H1 (cell line): ENCODE measurements at regions of chr11 and their contacts with region 1.

Region 1: DNA sequence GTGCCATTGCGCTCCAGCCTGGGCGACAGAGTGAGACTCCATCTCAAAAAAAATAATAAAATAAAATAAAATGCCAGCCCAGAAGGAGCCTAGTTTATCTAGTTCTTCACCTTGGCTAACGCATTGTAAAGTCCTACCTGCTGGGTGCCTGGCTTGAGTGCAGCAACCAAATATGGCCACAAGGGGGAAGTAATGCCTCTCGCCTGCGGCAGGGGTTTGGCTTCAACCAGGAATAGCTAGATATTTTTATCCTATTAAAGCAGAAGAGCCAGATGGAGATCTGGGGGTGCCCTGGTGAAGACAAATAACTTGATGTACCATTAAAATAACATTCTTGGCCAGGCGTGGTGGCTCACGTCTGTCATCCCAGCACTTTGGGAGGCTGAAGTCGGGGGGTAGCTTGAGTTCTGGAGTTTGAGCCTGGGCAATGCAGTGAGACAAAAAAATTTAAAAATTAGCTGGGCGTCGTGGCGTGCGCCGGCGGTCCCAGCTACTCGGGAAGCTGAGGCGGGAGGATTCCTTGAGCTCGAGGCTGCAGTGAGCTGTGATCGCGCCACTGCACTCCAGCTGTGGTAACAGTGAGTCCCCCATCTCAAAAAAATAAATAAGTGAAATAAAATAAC is 20.6 kb upstream of the PLEKHB1 start:
- DNase-seq: peak; percentile 39 to 90
- H3K4me3 ChIP-seq: no peak overlapping the region
- H3K27ac ChIP-seq: no peak overlapping the region
- H3K4me1 ChIP-seq: peaks cover 0 to 8% (median 3%) of the 10 kb centered on the region in 4 experiments; a peak in 5 of 7 replicates
- H3K27me3 ChIP-seq: peaks cover 7 to 36% (median 28%) of the 10 kb centered on the region in 4 experiments; a peak in 6 of 7 replicates
- CTCF ChIP-seq: peak; percentile 89 to 96 (median 93)
- EP300 ChIP-seq: no peak
- POLR2A ChIP-seq: no peak
- RAD21 ChIP-seq: peak; percentile 93 to 96

Region 2: GRCh38 chr11:73404048-73404447 is 221.8 kb before region 1 on chr11:
- CTCF ChIA-PET with region 1: interaction called, 22 read pairs
- POLR2A ChIA-PET with region 1: no interaction called
- DNase-seq: peak in 1 of 2 experiments; percentile 68
- H3K4me3 ChIP-seq: no peak overlapping the region
- H3K27ac ChIP-seq: no peak overlapping the region
- H3K4me1 ChIP-seq: peaks cover 0 to 3% (median 1%) of the 10 kb centered on the region in 4 experiments; a peak in 5 of 7 replicates
- H3K27me3 ChIP-seq: no peaks in the 10 kb centered on the region
- CTCF ChIP-seq: peak; percentile 76 to 84 (median 77)
- EP300 ChIP-seq: no peak
- POLR2A ChIP-seq: no peak
- RAD21 ChIP-seq: peak; percentile 89 to 90

Region 3: GRCh38 chr11:73423506-73423905 is 202.3 kb before region 1 on chr11:
- CTCF ChIA-PET with region 1: interaction called, 10 read pairs
- POLR2A ChIA-PET with region 1: no interaction called
- DNase-seq: no peak
- H3K4me3 ChIP-seq: no peak overlapping the region
- H3K27ac ChIP-seq: no peak overlapping the region
- H3K4me1 ChIP-seq: peaks cover 0 to 2% (median under 1%) of the 10 kb centered on the region in 4 experiments; a peak in 2 of 7 replicates
- H3K27me3 ChIP-seq: no peaks in the 10 kb centered on the region
- CTCF ChIP-seq: no peak
- EP300 ChIP-seq: no peak
- POLR2A ChIP-seq: no peak
- RAD21 ChIP-seq: no peak

Region 4: DNA sequence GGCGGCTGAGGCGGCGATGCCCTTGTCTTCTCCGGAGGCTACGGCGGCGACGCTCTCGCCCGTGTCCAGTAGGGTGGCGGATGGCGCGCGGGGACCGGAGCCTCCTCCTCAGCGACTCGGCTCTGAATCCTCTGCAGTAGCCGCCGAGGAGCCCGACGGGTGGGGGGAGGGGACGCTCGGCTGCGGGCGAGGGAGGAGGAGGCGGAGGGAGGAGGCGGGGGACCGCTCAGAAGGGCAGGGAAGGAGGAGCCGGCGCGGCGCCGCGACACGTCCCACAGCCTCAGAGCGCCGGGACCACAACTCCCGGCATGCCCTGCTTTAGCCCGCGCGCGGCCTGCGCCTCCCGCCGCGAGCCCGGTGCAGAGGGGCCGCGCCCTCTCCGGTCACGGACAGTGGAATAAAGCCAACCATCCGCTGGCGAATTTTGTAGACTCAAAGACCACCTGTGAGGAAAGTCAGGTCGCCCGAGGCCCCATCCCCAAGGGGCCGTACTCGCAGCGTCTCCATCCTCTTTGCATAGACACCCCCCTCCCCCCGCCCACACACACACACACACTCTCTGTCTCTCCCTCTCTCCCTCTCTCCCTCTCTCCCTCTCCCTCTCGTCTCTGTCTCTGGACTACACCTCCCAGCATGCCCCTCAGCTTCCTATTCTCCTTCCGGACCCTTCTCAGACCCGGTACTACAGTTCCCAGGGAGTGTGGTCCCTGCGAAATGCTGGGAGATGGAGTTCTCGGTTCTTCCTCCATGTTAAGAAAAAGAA is 27.7 kb before region 1 on chr11 and contains the start of gene FAM168A:
- CTCF ChIA-PET with region 1: interaction called, 34 read pairs
- POLR2A ChIA-PET with region 1: interaction called, 4 read pairs
- DNase-seq: peak; percentile 89 to 91
- H3K4me3 ChIP-seq: peak within 1 kb of the TSS; percentile 80 to 95 (median 90)
- H3K27ac ChIP-seq: peak within 1 kb of the TSS; percentile 78; the same call in 1 of the 2 replicates
- H3K4me1 ChIP-seq: peaks cover 3 to 10% (median 7%) of the 10 kb centered on the region in 4 experiments; a peak in 6 of 7 replicates
- H3K27me3 ChIP-seq: no peaks in the 10 kb centered on the region
- CTCF ChIP-seq: peak in 1 of 3 experiments; percentile 15; a peak in 1 of 4 replicates
- EP300 ChIP-seq: no peak; a peak in 1 of 3 replicates
- POLR2A ChIP-seq: peak in 1 of 2 experiments; percentile 79; a peak in 2 of 3 replicates
- RAD21 ChIP-seq: peak in 1 of 2 experiments; percentile 25; a peak in 2 of 4 replicates
- total RNA-seq, gene FAM168A: 21.6 and 22.8 TPM in 2 replicates

Region 5: DNA sequence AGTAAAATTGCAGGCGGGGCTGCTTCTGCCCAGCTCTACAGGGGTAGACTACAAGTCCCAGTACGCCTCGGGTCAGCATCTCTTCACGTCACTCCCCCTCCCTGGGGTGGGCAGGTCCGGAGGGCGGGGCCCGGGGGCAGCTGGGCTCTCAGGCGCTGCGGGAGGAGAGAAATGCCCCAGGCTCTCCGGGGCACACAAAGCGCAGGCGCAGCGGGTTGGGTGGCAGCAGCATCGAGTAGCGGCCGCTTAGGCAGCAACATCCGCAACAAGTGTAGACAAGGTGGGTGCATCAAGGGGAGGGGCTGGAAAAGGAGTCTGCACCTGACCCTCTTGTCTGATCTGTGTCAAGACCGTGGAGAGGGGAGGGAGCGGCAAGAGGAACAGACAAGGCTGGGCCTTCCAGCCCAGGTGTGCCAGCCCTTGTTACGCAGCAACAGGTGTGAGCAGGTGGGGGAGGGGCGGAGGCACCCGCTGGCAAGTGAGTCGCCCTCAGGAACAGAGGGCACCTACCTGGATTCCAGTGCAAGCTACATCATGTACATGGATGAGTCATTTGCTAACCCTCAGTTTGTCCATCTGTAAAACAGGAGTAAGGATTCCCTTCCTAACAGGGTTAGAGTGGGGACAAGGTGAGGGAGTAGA is 21.8 kb after region 1 on chr11:
- CTCF ChIA-PET with region 1: interaction called, 653 read pairs
- POLR2A ChIA-PET with region 1: interaction called, 31 read pairs
- DNase-seq: peak; percentile 70 to 96
- H3K4me3 ChIP-seq: peak overlapping the region; percentile 41 to 73 (median 58)
- H3K27ac ChIP-seq: no peak overlapping the region
- H3K4me1 ChIP-seq: peaks cover 9 to 25% (median 18%) of the 10 kb centered on the region in 4 experiments
- H3K27me3 ChIP-seq: peaks cover 0 to 4% (median 0%) of the 10 kb centered on the region in 4 experiments; a peak in 3 of 7 replicates
- CTCF ChIP-seq: no peak
- EP300 ChIP-seq: 0 out of 3 replicates have a peak, but pooled peaks of 1 of the 2 experiments have one; percentile 51
- POLR2A ChIP-seq: no peak
- RAD21 ChIP-seq: no peak; a peak in 1 of 4 replicates